ENCODE measurements at regions of chr7 and their contacts with region 1.

Region 1: DNA sequence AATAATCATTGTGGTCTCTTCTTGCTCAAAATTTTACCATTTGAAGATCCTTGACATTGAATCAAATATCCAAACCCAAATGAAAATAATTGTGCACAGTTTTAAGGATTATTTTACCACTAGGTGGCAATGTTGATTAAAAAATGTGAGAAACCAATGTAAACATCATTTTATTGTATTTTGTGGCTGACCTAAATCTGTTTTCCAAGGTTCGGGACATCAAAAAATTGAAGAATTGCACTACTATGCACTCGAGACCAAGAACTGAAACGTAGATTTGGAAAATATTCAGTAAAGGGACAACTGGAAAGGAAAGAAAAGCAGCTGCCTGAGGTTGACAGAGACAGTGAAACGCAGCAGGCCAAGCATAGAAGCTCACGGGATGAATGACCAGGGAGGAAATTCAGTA is 259.3 kb downstream of the SNX13 start:
- DNase-seq: no peak
- ATAC-seq: no peak

Region 2: GRCh38 chr7:17725796-17726195 is 44.8 kb after region 1 on chr7:
- intact Hi-C with region 1: no loop called
- DNase-seq: no peak
- ATAC-seq: no peak

Region 3: GRCh38 chr7:17769918-17770317 is 89.0 kb after region 1 on chr7:
- intact Hi-C with region 1: no loop called
- DNase-seq: no peak
- ATAC-seq: peak; percentile 67

Region 4: GRCh38 chr7:19665399-19666008 is 1984.6 kb after region 1 on chr7:
- intact Hi-C with region 1: loop called (anchors 10 kb)
- DNase-seq: no peak
- ATAC-seq: no peak